Activated CD4-positive, alpha-beta T cell treated with anti-CD3 and anti-CD28 coated beads, Interleukin-2, amount 10 ng/mL, durations not matched to agents 24 days and 14 days (primary cell): ENCODE measurements at regions of chr10 and their contacts with region 1.

Region 1: DNA sequence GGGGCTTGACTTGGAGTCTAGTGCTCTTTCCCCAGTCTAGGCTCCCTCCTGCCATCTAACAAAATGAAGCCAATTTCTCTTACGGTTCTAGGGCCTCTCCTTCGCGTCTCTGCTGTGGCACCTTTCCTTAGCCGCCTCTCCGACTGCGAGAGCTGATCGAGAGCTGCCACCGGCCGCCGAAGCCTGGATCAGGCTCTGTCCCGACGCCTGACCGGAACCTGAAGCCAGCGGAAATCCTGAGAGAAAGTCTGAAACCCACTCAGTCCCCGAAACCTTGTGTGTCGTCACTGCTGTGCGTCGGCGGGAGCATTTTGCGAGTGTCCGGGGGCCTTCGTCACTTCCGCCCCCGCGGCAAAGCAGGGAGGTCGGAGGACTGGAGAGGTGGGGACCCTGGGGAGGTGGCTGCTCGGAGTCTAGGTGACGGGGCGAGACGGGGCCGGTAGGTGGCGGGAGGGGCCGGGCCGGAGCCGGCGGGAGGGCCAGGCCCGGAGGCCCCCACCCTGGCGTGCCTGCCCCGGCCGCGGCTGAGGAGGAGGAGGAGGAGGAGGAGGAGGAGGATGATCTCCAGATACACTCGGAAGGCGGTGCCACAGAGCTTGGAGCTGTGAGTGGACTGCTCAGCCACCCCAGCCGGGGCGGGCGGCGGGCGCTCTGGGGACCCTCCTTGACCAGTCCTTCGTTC is at the starts of genes ECD and FAM149B1:
- DNase-seq: peak; percentile 98
- H3K4me3 Mint-ChIP-seq: peak within 1 kb of the TSS; percentile 97
- H3K27ac Mint-ChIP-seq: peak within 1 kb of the TSS; percentile 99
- H3K4me1 Mint-ChIP-seq: peaks cover 35% of the 10 kb centered on the region
- H3K27me3 Mint-ChIP-seq: no peaks in the 10 kb centered on the region
- total RNA-seq, gene ECD: 38.5 and 40.7 TPM in 2 replicates
- total RNA-seq, gene FAM149B1: 10.5 and 11.5 TPM in 2 replicates

Region 2: GRCh38 chr10:72354478-72355213 is 813.3 kb before region 1 on chr10 and contains the start of gene DNAJB12:
- intact Hi-C with region 1: loop called (anchors 10 kb)
- DNase-seq: peak; percentile 97
- H3K4me3 Mint-ChIP-seq: peak within 1 kb of the TSS; percentile 90
- H3K27ac Mint-ChIP-seq: peak within 1 kb of the TSS; percentile 99
- H3K4me1 Mint-ChIP-seq: peaks cover 26% of the 10 kb centered on the region
- H3K27me3 Mint-ChIP-seq: no peaks in the 10 kb centered on the region
- total RNA-seq, gene DNAJB12: 32.5 and 35.1 TPM in 2 replicates

Region 3: GRCh38 chr10:72472306-72472705 is 695.6 kb before region 1 on chr10:
- intact Hi-C with region 1: no loop called
- DNase-seq: no peak
- H3K4me3 Mint-ChIP-seq: no peak overlapping the region
- H3K27ac Mint-ChIP-seq: no peak overlapping the region
- H3K4me1 Mint-ChIP-seq: peaks cover under 1% of the 10 kb centered on the region
- H3K27me3 Mint-ChIP-seq: no peaks in the 10 kb centered on the region

Region 4: DNA sequence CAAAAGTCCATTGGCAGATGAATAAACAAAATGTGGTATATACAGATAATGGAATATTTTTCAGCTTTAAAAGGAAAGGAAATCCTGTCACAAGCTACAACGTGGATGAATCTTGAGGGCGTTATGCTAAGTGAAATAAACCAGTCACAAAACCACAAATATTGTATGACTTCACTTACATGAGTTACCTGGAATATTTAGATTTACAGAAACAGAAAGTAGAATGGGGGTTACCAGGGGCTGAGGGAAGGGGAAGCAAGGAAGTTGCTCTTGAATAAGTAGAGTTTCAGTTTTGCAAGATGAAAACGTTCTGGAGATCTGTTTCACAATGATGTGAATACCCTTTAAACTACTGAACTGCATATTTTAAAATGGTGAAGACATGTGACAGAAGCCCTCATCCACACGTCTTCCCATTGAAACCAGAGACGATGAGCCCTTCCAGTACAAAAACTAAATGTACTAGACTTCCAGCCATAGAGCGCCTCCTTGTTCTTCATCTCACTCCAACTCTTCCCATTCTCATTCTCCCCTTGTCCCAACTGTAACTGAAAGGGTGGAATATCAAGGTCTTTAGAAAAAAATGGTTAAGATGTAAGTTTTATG is 604.5 kb before region 1 on chr10:
- intact Hi-C with region 1: loop called (anchors 5 kb)
- DNase-seq: peak; percentile 79
- H3K4me3 Mint-ChIP-seq: peak overlapping the region; percentile 75
- H3K27ac Mint-ChIP-seq: peak overlapping the region; percentile 96
- H3K4me1 Mint-ChIP-seq: peaks cover 41% of the 10 kb centered on the region
- H3K27me3 Mint-ChIP-seq: no peaks in the 10 kb centered on the region

Region 5: GRCh38 chr10:73136627-73137026 is 31.3 kb before region 1 on chr10:
- intact Hi-C with region 1: no loop called
- DNase-seq: no peak
- H3K4me3 Mint-ChIP-seq: no peak overlapping the region
- H3K27ac Mint-ChIP-seq: no peak overlapping the region
- H3K4me1 Mint-ChIP-seq: no peaks in the 10 kb centered on the region
- H3K27me3 Mint-ChIP-seq: no peaks in the 10 kb centered on the region

Region 6: DNA sequence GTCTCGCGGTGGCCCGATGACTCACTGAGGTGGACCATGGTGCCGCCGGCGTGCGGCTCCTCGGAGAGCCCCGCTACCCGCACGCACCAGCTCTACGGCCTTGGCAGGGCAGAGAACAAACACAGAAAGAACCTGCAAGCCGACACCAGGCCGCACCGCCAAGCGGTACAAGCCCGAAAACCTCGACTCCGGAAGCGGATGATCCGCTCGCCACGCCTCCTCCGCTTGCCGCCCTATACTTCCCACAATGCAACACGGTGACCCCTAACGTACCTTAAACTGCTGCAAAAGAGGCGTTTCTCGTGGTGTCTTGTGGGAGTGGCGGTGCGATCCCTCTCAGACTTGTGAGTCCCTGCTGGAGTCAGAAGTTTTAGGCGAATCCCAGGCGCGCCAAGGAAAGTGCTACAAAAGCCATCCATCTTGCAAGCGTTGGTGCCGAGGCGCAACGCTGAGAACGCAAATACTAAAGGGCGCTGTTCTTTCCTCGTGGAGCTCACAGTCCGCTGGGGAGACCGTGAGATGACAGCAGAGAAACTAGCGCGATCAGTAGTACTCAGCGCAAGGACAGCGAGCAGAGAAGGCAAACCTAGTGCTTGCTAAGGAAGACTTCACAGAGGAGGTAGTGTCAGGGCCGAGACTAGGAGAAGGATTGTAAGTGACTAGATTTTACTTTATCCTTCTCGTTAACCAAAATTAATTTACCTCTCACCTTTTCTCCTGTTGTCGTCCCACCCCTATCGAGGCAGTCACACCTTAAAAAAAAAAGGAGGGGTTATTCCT is 84.7 kb after region 1 on chr10 and contains the start of gene MRPS16:
- intact Hi-C with region 1: loop called (anchors 2 kb)
- DNase-seq: peak; percentile 98
- H3K4me3 Mint-ChIP-seq: peak within 1 kb of the TSS; percentile 94
- H3K27ac Mint-ChIP-seq: peak within 1 kb of the TSS; percentile 96
- H3K4me1 Mint-ChIP-seq: peaks cover 34% of the 10 kb centered on the region
- H3K27me3 Mint-ChIP-seq: no peaks in the 10 kb centered on the region
- total RNA-seq, gene MRPS16: 164 TPM in 2 replicates